AG04450 (cell line): ENCODE measurements at regions of chr11 and their contacts with region 1.

Region 1: DNA sequence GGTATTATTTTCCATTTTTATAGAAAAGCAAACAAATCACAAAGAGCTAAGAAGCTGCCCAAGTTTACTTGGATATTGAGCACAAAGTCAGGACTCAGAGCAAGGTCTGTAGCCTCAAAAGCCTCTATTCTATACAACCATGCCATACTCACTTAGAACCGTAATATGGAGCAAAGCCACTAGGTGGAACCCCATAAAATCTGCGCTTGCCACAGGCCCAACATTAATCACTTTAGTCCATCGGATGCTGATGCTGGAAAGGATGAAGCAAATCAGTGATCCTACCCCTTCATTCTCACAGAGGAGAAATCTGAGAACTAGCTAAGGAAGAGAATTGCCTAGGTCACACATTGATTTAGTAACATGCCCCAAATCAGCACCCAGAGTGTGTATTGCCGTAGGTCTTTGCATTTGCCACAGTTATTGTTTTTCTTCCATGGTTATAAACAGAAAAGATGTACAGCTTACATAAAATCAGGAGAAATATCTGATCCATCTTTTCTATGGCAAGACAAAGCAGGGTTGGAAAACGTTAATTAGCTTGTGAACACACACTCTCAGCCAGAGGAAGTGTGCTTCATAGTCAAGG is 56.7 kb upstream of the RAB38 start:
- DNase-seq: peak; percentile 3
- H3K4me3 ChIP-seq: no peak overlapping the region
- H3K27ac ChIP-seq: no peak overlapping the region
- H3K27me3 ChIP-seq: no peaks in the 10 kb centered on the region
- CTCF ChIP-seq: peak; percentile 76

Region 2: GRCh38 chr11:88250566-88251242 is 18.7 kb after region 1 on chr11:
- CTCF ChIA-PET with region 1: interaction called, 10 read pairs
- POLR2A ChIA-PET with region 1: no interaction called
- DNase-seq: no peak
- H3K4me3 ChIP-seq: no peak overlapping the region
- H3K27ac ChIP-seq: no peak overlapping the region
- H3K27me3 ChIP-seq: no peaks in the 10 kb centered on the region
- CTCF ChIP-seq: no peak

Region 3: DNA sequence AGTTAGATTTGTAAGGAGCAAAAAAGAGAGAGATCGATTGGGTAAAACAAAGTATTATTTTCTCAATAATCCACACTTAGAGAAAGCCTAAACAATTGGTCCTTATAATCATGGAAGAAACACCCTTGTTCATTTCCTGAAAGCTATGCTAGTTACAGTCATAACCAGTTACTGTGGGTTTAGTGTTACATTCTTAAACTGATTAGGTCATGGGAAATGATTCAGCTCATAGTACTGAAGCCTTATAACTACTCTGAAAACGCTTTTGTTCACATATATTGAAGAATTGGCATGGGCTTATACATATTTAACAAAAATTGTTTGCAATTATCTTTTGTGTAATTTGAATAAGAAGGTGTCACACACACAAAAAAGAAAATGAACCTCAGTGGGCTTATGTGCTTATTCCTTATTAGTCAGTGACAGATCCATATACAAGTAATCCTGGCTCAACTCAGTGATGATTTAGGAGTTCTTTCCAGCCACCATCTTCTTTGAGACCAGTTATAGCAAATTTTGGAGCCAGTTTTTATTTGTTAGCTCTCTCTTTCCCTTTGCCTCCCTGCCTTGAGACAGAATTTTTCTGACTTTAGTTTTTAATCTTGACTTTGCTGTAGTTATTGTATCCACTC is 304.0 kb after region 1 on chr11:
- CTCF ChIA-PET with region 1: interaction called, 15 read pairs
- POLR2A ChIA-PET with region 1: no interaction called
- DNase-seq: peak; percentile 42
- H3K4me3 ChIP-seq: no peak overlapping the region
- H3K27ac ChIP-seq: peak overlapping the region; percentile 3
- H3K27me3 ChIP-seq: no peaks in the 10 kb centered on the region
- CTCF ChIP-seq: no peak

Region 4: GRCh38 chr11:89015614-89016013 is 783.6 kb after region 1 on chr11:
- CTCF ChIA-PET with region 1: no interaction called
- POLR2A ChIA-PET with region 1: no interaction called
- DNase-seq: no peak
- H3K4me3 ChIP-seq: no peak overlapping the region
- H3K27ac ChIP-seq: no peak overlapping the region
- H3K27me3 ChIP-seq: no peaks in the 10 kb centered on the region
- CTCF ChIP-seq: no peak